BJ (cell line): ENCODE measurements at regions of chr10 and their contacts with region 1.

Region 1: GRCh38 chr10:101060036-101060950 is 1.5 kb upstream of the KAZALD1 start:
- DNase-seq: no peak
- H3K4me3 ChIP-seq: peak overlapping the region; percentile 86
- H3K27me3 ChIP-seq: no peaks in the 10 kb centered on the region
- CTCF ChIP-seq: peak; percentile 87

Region 2: DNA sequence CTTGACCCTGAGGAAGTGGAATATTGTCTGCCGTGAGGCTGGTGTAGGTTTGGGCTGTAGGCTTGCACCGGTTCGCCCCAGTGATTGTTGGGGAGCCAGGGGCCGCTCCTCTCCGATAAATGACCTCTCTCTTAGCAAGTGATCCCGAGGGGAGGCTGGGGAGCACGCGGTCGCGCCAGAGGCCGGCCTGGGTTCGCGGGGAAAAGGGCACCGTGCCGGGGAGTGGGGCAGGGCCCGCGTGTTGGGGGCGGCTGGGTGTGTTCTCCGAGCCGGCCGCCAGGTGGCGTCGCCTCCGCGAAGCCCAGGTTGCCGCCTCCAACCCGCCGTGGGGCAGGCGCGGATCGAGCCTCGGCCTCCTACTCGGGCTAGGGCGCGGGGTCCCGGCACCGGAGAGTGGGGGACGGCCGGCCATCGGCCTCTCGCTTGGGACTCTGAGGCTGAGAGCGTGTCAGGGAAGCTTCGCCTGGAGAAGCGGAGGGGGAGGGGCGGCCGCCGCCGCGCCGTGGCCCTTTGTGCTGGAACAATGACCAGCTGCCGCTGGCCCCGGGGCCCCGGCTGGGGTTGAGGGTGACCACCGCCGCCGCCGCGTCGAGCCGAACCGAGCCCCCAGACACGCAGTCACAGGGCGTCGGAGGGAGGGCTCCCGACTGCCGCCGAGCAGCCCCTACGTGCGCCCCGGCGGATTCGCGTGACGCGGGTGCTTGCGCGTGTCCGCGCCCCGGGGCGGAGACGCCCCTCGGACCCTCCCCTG is 61.1 kb before region 1 on chr10:
- CTCF ChIA-PET with region 1: interaction called, 18 read pairs
- POLR2A ChIA-PET with region 1: no interaction called
- DNase-seq: no peak
- H3K4me3 ChIP-seq: peak overlapping the region; percentile 71
- H3K27me3 ChIP-seq: no peaks in the 10 kb centered on the region
- CTCF ChIP-seq: peak; percentile 67

Region 3: GRCh38 chr10:101042667-101043355 is 17.5 kb before region 1 on chr10:
- CTCF ChIA-PET with region 1: interaction called, 676 read pairs
- POLR2A ChIA-PET with region 1: interaction called, 13 read pairs
- DNase-seq: peak; percentile 92
- H3K4me3 ChIP-seq: peak overlapping the region; percentile 47
- H3K27me3 ChIP-seq: peaks cover 3% of the 10 kb centered on the region; the same call in 1 of the 2 replicates
- CTCF ChIP-seq: no peak

Region 4: DNA sequence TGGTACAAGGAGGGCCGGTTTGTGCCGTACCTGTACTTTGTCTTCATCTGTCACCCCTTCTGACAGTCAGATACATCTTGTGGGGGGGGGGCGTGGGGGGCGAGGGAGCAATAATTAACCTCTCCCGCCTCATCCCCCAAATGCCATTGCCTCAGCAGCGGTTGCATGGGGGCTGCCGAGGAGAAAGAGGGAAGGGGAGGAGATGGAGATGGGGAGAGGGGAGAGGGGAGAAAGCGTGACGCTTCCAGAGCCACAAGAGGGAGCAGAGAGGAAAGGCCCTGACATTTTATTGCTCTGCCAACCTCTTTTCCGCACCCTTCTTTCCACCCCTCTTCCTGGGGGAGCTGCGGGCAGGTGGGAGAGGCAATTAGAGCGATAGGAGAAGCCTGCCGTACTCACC is 13.3 kb after region 1 on chr10:
- CTCF ChIA-PET with region 1: interaction called, 676 read pairs
- POLR2A ChIA-PET with region 1: no interaction called
- DNase-seq: no peak
- H3K4me3 ChIP-seq: no peak overlapping the region
- H3K27me3 ChIP-seq: peaks cover 26% of the 10 kb centered on the region
- CTCF ChIP-seq: 0 out of 2 replicates have a peak, but pooled peaks have one; percentile 16